Esophagus muscularis mucosa (tissue), 4 donors: ENCODE measurements at regions of chr6 and their contacts with region 1.

Region 1: DNA sequence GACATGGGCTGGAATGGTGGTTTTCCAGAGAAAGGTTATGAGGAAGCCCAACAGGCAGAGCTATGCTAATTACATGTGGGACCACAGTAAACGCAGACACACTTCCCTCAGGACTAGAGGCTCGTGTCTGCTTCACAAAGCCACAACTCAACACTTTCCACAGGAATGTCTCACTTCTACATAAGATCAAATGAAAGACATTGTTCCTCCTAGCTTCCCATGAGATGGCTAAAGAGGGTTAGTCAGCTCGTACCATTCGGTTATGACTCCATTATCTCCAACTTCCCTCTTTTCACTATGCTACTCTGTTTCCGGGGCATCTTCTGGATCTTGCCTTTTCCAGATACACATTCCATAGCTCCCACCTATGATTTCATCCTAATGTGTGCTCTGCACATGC is 29.1 kb upstream of the ZC3H12D start:
- DNase-seq: no peak
- H3K4me3 ChIP-seq: no peak overlapping the region
- H3K27ac ChIP-seq: no peak overlapping the region
- H3K4me1 ChIP-seq: peaks cover 0 to 15% (median 14%) of the 10 kb centered on the region in 4 donors
- H3K27me3 ChIP-seq: no peaks in the 10 kb centered on the region
- CTCF ChIP-seq: no peak
- EP300 ChIP-seq: no peak
- POLR2A ChIP-seq: no peak

Region 2: DNA sequence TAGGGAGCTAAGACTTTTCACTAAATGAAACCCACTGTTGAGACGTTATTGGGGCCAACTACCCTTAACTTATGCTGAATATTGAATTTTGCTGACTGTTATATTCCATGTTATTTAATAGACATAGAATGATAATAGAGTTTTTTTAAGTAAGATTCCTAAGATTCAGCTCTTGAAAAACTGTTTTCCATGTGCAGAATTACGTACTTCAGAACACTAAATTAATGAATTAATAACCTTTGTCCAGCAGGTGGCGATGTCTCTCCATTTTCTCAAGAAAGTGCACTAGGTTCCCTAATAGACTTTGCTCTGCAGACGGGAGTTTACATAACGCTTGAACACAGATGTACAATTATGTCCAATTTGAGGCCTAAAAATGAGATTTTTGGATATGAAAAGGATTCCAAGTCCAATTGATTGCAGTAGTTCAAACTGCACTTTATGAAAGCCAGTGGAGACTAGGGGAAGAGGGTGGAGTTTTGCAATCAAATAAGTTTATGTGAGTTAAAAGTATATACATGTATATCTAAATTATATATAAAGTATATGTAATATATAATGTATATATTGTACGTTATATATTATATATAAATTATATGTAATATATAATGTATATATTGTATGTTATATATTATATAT is 485.0 kb before region 1 on chr6:
- intact Hi-C with region 1: loop called (anchors 2 kb)
- DNase-seq: peak; percentile 78
- H3K4me3 ChIP-seq: no peak overlapping the region
- H3K27ac ChIP-seq: no peak overlapping the region
- H3K4me1 ChIP-seq: peaks cover 0 to 30% (median 26%) of the 10 kb centered on the region in 4 donors
- H3K27me3 ChIP-seq: no peaks in the 10 kb centered on the region
- CTCF ChIP-seq: peak; percentile 67 to 78 (median 74)
- EP300 ChIP-seq: no peak
- POLR2A ChIP-seq: no peak

Region 3: GRCh38 chr6:149431905-149432775 is 81.8 kb before region 1 on chr6:
- intact Hi-C with region 1: loop called (anchors 5 kb)
- DNase-seq: peak; percentile 97
- H3K4me3 ChIP-seq: peak overlapping the region in 1 of 4 donors; percentile 18
- H3K27ac ChIP-seq: no peak overlapping the region
- H3K4me1 ChIP-seq: peaks cover 3 to 18% (median 9%) of the 10 kb centered on the region in 4 donors
- H3K27me3 ChIP-seq: no peaks in the 10 kb centered on the region
- CTCF ChIP-seq: peak; percentile 94 to 95 (median 94)
- EP300 ChIP-seq: no peak
- POLR2A ChIP-seq: no peak

Region 4: GRCh38 chr6:149454386-149454848 is 59.5 kb before region 1 on chr6:
- intact Hi-C with region 1: loop called (anchors 5 kb)
- DNase-seq: no peak
- H3K4me3 ChIP-seq: peak overlapping the region in 3 of 4 donors; percentile 12 to 22 (median 21)
- H3K27ac ChIP-seq: peak overlapping the region; percentile 71 to 81 (median 78)
- H3K4me1 ChIP-seq: peaks cover 52 to 81% (median 64%) of the 10 kb centered on the region in 4 donors
- H3K27me3 ChIP-seq: peaks cover 0 to 12% (median 3%) of the 10 kb centered on the region in 4 donors
- CTCF ChIP-seq: no peak
- EP300 ChIP-seq: no peak
- POLR2A ChIP-seq: no peak